Mammary epithelial cell (primary cell): ENCODE measurements at regions of chr11 and their contacts with region 1.

Region 1: DNA sequence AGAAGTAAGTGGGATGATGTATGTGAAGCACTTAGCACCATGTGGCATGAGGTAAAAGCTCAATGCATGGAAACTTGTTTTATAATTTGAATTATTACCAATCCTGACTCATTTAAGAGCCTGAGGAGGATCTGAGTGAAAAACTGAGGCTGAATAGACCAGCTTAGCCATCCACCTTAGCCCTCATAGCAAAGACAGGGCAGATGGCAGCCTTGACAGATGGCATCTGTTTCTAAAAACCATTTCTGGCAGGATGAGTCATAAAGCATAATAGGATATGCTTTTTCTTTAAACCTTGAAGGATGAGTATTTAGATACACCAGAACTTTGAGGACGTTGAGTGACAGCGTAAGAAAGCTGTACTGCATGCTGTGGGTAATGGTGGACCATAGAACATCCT is 61.0 kb upstream of the NAV2 start:
- DNase-seq: no peak
- H3K4me3 ChIP-seq: no peak overlapping the region
- H3K27ac ChIP-seq: no peak overlapping the region
- H3K4me1 ChIP-seq: peaks cover 13% of the 10 kb centered on the region
- H3K27me3 ChIP-seq: no peaks in the 10 kb centered on the region
- CTCF ChIP-seq: no peak

Region 2: GRCh38 chr11:19595840-19596751 is 55.6 kb before region 1 on chr11:
- CTCF ChIA-PET with region 1: no interaction called
- dilution Hi-C with region 1: loop called (anchors 5 kb)
- in situ Hi-C with region 1: no loop called
- intact Hi-C with region 1: no loop called
- DNase-seq: peak; percentile 75
- H3K4me3 ChIP-seq: no peak overlapping the region
- H3K27ac ChIP-seq: no peak overlapping the region
- H3K4me1 ChIP-seq: peaks cover 21% of the 10 kb centered on the region
- H3K27me3 ChIP-seq: no peaks in the 10 kb centered on the region
- CTCF ChIP-seq: no peak